ENCODE measurements at regions of chr1 and their contacts with region 1.

Region 1: GRCh38 chr1:76154206-76154956 is 79.8 kb downstream of the ST6GALNAC3 start:
- DNase-seq: peak; percentile 49
- ATAC-seq: peak; percentile 98
- H3K4me3 ChIP-seq: no peak overlapping the region
- H3K27ac ChIP-seq: no peak overlapping the region
- H3K4me1 ChIP-seq: no peaks in the 10 kb centered on the region
- H3K27me3 ChIP-seq: no peaks in the 10 kb centered on the region; the same call in 1 of the 2 replicates
- CTCF ChIP-seq: peak; percentile 80
- POLR2A ChIP-seq: no peak
- RAD21 ChIP-seq: peak; percentile 78

Region 2: DNA sequence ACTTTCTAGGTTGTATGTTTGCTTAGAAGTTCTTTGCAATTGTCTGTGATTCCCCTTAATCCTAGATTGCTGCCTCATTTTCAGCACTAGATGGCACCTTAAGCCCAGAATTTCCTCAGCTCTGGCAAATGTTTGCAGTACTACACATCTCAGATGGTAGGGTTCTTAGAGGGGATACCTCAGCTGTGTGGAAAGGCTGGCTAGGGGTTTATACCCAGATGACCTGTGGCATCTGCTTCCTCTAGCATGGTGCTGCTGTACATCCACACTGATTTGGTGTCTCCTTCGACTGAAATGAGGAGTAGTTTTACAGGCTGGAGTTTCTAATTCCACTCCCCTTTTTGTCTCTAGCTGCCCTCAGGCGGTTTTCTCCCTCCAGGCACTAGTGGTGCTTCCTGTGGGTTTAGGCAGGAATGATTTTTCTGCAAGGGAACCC is 245.6 kb before region 1 on chr1:
- CTCF ChIA-PET with region 1: no interaction called
- POLR2A ChIA-PET with region 1: no interaction called
- dilution Hi-C with region 1: no loop called
- in situ Hi-C with region 1: no loop called
- intact Hi-C with region 1: loop called (anchors 2 kb)
- DNase-seq: peak; percentile 50
- ATAC-seq: peak; percentile 91
- H3K4me3 ChIP-seq: no peak overlapping the region
- H3K27ac ChIP-seq: no peak overlapping the region
- H3K4me1 ChIP-seq: no peaks in the 10 kb centered on the region
- H3K27me3 ChIP-seq: no peaks in the 10 kb centered on the region
- CTCF ChIP-seq: peak; percentile 64
- POLR2A ChIP-seq: no peak
- RAD21 ChIP-seq: peak; percentile 68

Region 3: DNA sequence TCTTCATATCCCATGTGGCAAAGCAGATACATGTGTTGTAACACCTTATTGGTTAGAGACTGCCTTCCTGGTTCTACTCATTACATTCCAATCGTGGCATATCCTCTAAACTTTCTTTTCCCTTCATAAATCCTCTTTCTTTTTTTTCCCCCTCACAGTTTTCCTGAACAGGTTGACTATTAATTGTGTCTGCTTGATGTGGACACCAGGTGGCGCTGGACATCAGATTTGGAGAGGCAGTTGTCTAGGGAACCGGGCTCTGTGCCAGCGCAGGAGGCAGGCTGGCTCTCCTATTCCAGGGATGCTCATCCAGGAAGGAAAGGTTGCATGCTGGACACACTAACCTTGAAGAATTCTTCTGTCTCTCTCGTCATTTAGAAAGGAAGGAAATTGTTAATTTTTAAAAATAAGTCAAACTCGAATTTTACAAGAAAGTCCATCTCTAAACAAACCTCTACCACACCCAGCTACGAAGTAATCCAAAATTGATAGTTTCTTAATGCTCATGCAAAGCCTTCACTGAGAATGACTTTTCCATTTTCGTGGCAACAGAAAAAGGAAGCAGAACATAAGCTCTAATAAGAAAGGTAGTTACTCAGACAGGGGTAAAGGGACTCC is 162.8 kb before region 1 on chr1:
- CTCF ChIA-PET with region 1: no interaction called
- POLR2A ChIA-PET with region 1: no interaction called
- dilution Hi-C with region 1: no loop called
- in situ Hi-C with region 1: no loop called
- intact Hi-C with region 1: loop called (anchors 1 kb)
- DNase-seq: peak; percentile 83
- ATAC-seq: peak; percentile 73
- H3K4me3 ChIP-seq: no peak overlapping the region
- H3K27ac ChIP-seq: no peak overlapping the region
- H3K4me1 ChIP-seq: no peaks in the 10 kb centered on the region
- H3K27me3 ChIP-seq: peaks cover 2% of the 10 kb centered on the region; the same call in 1 of the 2 replicates
- CTCF ChIP-seq: peak; percentile 83
- POLR2A ChIP-seq: no peak
- RAD21 ChIP-seq: peak; percentile 67

Region 4: GRCh38 chr1:76006234-76006633 is 148.1 kb before region 1 on chr1:
- CTCF ChIA-PET with region 1: no interaction called
- POLR2A ChIA-PET with region 1: no interaction called
- dilution Hi-C with region 1: no loop called
- in situ Hi-C with region 1: no loop called
- intact Hi-C with region 1: no loop called
- DNase-seq: peak; percentile 83
- ATAC-seq: peak; percentile 92
- H3K4me3 ChIP-seq: no peak overlapping the region
- H3K27ac ChIP-seq: no peak overlapping the region
- H3K4me1 ChIP-seq: peaks cover 11% of the 10 kb centered on the region
- H3K27me3 ChIP-seq: no peaks in the 10 kb centered on the region
- CTCF ChIP-seq: no peak
- POLR2A ChIP-seq: no peak
- RAD21 ChIP-seq: no peak

Region 5: GRCh38 chr1:76901158-76901767 is 746.9 kb after region 1 on chr1:
- CTCF ChIA-PET with region 1: no interaction called
- POLR2A ChIA-PET with region 1: no interaction called
- dilution Hi-C with region 1: no loop called
- in situ Hi-C with region 1: no loop called
- intact Hi-C with region 1: loop called (anchors 10 kb)
- DNase-seq: peak; percentile 58
- ATAC-seq: peak; percentile 86
- H3K4me3 ChIP-seq: no peak overlapping the region
- H3K27ac ChIP-seq: no peak overlapping the region
- H3K4me1 ChIP-seq: no peaks in the 10 kb centered on the region
- H3K27me3 ChIP-seq: no peaks in the 10 kb centered on the region
- CTCF ChIP-seq: peak; percentile 68
- POLR2A ChIP-seq: no peak
- RAD21 ChIP-seq: peak; percentile 65

Region 6: GRCh38 chr1:77126307-77126706 is 971.9 kb after region 1 on chr1:
- CTCF ChIA-PET with region 1: no interaction called
- POLR2A ChIA-PET with region 1: no interaction called
- dilution Hi-C with region 1: no loop called
- in situ Hi-C with region 1: no loop called
- intact Hi-C with region 1: loop called (anchors 1 kb)
- DNase-seq: peak; percentile 80
- ATAC-seq: peak; percentile 88
- H3K4me3 ChIP-seq: no peak overlapping the region
- H3K27ac ChIP-seq: no peak overlapping the region
- H3K4me1 ChIP-seq: no peaks in the 10 kb centered on the region
- H3K27me3 ChIP-seq: no peaks in the 10 kb centered on the region
- CTCF ChIP-seq: peak; percentile 83
- POLR2A ChIP-seq: no peak
- RAD21 ChIP-seq: peak; percentile 93

Region 7: GRCh38 chr1:77143529-77144121 is 989.2 kb after region 1 on chr1:
- CTCF ChIA-PET with region 1: no interaction called
- POLR2A ChIA-PET with region 1: no interaction called
- dilution Hi-C with region 1: no loop called
- in situ Hi-C with region 1: loop called (anchors 10 kb)
- intact Hi-C with region 1: loop called (anchors 1 kb)
- DNase-seq: peak; percentile 1
- ATAC-seq: no peak
- H3K4me3 ChIP-seq: no peak overlapping the region
- H3K27ac ChIP-seq: no peak overlapping the region
- H3K4me1 ChIP-seq: no peaks in the 10 kb centered on the region
- H3K27me3 ChIP-seq: no peaks in the 10 kb centered on the region
- CTCF ChIP-seq: peak; percentile 45
- POLR2A ChIP-seq: no peak
- RAD21 ChIP-seq: peak; percentile 43